Mammary epithelial cell (primary cell): ENCODE measurements at regions of chr10 and their contacts with region 1.

Region 1: GRCh38 chr10:119207367-119207668 is at the start of gene GRK5:
- DNase-seq: peak; percentile 95
- H3K4me3 ChIP-seq: peak within 1 kb of the TSS; percentile 47 to 79 (median 61)
- H3K27ac ChIP-seq: peak within 1 kb of the TSS; percentile 41
- H3K4me1 ChIP-seq: peaks cover 30% of the 10 kb centered on the region
- H3K27me3 ChIP-seq: no peaks in the 10 kb centered on the region
- CTCF ChIP-seq: no peak
- total RNA-seq, gene GRK5: 1.2 to 6.9 TPM

Region 2: DNA sequence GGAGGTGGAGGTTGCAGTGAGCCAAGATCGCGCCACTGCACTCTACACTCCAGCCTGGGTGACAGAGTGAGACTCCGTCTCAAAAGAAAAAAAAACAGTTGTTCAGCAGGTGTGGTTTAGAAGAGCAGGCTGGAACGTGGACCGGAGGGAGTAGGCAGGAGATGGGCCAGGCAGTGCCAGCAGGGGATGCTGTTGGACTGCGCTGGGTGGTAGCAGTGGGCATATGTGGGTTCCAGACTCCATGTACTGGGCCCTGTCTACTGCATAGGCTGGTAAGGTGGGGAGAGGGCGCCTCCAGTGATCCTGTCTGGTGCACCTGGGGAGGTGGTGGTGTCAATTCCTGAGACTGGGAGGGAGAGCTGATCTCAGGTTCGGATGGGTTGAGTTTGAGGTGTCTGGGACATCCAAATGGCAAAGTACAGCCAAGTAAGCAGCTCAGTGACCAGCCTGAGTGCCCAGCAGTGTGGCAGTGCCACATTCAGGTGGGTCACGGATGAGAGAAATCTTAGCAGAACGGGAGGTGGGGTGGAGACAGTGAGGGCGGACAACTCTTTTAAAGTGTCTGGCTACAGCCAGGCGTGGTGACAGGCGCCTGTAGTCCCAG is 67.8 kb before region 1 on chr10:
- CTCF ChIA-PET with region 1: no interaction called
- dilution Hi-C with region 1: no loop called
- in situ Hi-C with region 1: no loop called
- intact Hi-C with region 1: loop called (anchors 1 kb)
- DNase-seq: peak; percentile 16
- H3K4me3 ChIP-seq: no peak overlapping the region
- H3K27ac ChIP-seq: no peak overlapping the region
- H3K4me1 ChIP-seq: no peaks in the 10 kb centered on the region
- H3K27me3 ChIP-seq: no peaks in the 10 kb centered on the region
- CTCF ChIP-seq: peak; percentile 69 to 72

Region 3: DNA sequence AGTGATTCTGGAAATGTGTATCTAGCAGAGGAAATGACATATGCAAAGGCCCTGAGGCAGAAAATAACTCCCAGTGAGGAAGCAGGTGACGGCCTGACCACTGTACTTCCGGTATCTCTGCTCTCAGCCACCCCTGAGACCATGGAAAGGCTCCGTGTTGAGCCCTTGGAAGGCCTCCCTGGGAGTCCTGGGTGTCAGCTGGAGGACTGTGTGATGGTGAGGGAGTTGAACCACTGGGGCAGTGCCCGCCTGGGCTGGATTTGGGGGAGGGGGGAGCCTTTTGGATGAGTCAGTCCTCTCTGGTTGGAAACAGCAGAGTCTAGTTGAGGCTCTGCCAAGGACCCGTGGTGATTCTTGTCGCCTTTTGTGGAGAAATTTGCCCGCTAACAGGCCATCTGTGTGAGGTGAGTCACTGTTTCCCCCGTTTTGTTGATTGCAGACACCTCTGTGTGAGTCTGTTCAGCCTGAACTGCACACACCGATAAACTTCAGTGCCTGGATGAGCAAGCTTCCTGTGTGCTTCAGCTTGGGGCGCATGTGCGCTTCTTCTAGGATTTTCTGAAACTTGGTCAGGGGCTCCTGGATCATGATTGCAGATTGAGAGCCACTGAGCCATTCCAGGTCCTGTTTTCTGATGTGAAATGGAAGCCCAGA is 98.7 kb after region 1 on chr10:
- CTCF ChIA-PET with region 1: no interaction called
- dilution Hi-C with region 1: no loop called
- in situ Hi-C with region 1: no loop called
- intact Hi-C with region 1: loop called (anchors 2 kb)
- DNase-seq: peak; percentile 97
- H3K4me3 ChIP-seq: no peak overlapping the region
- H3K27ac ChIP-seq: peak overlapping the region; percentile 50
- H3K4me1 ChIP-seq: peaks cover 44% of the 10 kb centered on the region
- H3K27me3 ChIP-seq: no peaks in the 10 kb centered on the region
- CTCF ChIP-seq: no peak

Region 4: DNA sequence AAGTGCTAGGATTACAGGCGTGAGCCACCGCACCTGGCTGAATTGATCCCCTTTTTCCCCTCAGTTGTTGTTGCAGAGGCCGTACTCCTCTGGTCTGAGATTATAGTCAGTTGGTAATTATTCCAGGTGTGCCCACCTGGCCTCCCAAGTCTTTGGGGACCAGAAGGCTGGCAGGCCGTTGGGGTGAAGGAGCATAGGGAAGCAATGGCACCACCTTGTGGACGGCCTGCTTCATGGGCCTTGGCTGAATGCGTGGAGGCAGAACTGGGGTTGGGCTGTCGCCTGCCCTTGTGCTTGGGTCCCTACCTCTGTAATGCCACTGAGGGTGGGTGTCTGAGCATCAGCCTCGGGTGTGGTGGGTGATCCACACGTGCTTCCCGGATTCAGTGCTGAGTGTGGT is 209.5 kb after region 1 on chr10:
- CTCF ChIA-PET with region 1: no interaction called
- dilution Hi-C with region 1: no loop called
- in situ Hi-C with region 1: loop called in 1 of 2 experiments (anchors 5 kb)
- intact Hi-C with region 1: loop called (anchors 1 kb)
- DNase-seq: peak; percentile 41
- H3K4me3 ChIP-seq: no peak overlapping the region
- H3K27ac ChIP-seq: no peak overlapping the region
- H3K4me1 ChIP-seq: no peaks in the 10 kb centered on the region
- H3K27me3 ChIP-seq: no peaks in the 10 kb centered on the region
- CTCF ChIP-seq: peak; percentile 74 to 91

Region 5: GRCh38 chr10:119489991-119490326 is 282.6 kb after region 1 on chr10:
- CTCF ChIA-PET with region 1: interaction called, 5 read pairs
- dilution Hi-C with region 1: no loop called
- in situ Hi-C with region 1: no loop called
- intact Hi-C with region 1: loop called (anchors 2 kb)
- DNase-seq: no peak
- H3K4me3 ChIP-seq: no peak overlapping the region
- H3K27ac ChIP-seq: no peak overlapping the region
- H3K4me1 ChIP-seq: no peaks in the 10 kb centered on the region
- H3K27me3 ChIP-seq: no peaks in the 10 kb centered on the region
- CTCF ChIP-seq: no peak